Activated CD4-positive, alpha-beta T cell treated with anti-CD3 and anti-CD28 coated beads, Interleukin-2, amount 10 ng/mL, durations not matched to agents 24 days and 14 days (primary cell): ENCODE measurements at regions of chr12 and their contacts with region 1.

Region 1: GRCh38 chr12:2884810-2885209 is 5.9 kb upstream of the TULP3 start:
- DNase-seq: no peak
- H3K4me3 Mint-ChIP-seq: no peak overlapping the region
- H3K27ac Mint-ChIP-seq: peak overlapping the region; percentile 7
- H3K4me1 Mint-ChIP-seq: peaks cover 39% of the 10 kb centered on the region
- H3K27me3 Mint-ChIP-seq: no peaks in the 10 kb centered on the region

Region 2: GRCh38 chr12:2944401-2945047 is 59.7 kb after region 1 on chr12:
- intact Hi-C with region 1: loop called (anchors 1 kb)
- DNase-seq: peak; percentile 88
- H3K4me3 Mint-ChIP-seq: peak overlapping the region; percentile 23
- H3K27ac Mint-ChIP-seq: no peak overlapping the region
- H3K4me1 Mint-ChIP-seq: peaks cover 4% of the 10 kb centered on the region
- H3K27me3 Mint-ChIP-seq: peaks cover 5% of the 10 kb centered on the region

Region 3: GRCh38 chr12:3041558-3042164 is 156.9 kb after region 1 on chr12:
- intact Hi-C with region 1: loop called (anchors 2 kb)
- DNase-seq: peak; percentile 88
- H3K4me3 Mint-ChIP-seq: no peak overlapping the region
- H3K27ac Mint-ChIP-seq: no peak overlapping the region
- H3K4me1 Mint-ChIP-seq: no peaks in the 10 kb centered on the region
- H3K27me3 Mint-ChIP-seq: peaks cover 9% of the 10 kb centered on the region